ENCODE measurements at regions of chr5 and their contacts with region 1.

Region 1: DNA sequence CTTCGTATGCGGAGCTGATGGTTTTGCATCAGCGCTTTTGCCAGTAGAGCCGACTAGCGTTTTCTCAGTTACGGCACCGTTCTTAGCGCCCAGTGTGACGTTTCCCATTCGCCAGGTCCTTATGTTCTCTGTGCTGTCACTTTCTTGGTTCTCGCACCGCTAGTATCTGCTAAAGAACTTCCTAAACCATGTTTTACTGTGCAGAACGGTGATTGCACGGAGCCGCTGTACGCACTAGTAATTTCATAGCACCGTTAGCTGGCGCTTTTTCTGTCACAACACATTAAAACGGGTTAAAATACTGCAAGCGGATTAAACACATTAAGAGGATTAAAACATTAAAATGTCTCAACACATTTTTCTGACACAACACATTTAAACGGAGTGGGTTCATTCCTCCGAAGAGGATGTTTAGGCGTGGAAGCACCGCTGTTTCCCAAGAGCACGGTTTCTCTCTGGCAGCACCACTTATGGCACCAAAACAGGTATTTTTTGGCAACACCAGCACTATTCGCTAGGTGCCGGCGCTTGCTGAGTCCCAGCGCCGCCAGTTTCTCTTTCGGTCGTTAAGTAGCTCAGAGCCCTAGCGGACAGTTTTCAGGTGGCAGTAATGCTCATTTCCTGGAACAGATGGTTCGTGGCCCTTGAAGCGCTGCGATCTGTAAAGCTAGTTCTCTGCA is 20.4 kb downstream of the ANXA2R start:
- DNase-seq: no peak

Region 2: DNA sequence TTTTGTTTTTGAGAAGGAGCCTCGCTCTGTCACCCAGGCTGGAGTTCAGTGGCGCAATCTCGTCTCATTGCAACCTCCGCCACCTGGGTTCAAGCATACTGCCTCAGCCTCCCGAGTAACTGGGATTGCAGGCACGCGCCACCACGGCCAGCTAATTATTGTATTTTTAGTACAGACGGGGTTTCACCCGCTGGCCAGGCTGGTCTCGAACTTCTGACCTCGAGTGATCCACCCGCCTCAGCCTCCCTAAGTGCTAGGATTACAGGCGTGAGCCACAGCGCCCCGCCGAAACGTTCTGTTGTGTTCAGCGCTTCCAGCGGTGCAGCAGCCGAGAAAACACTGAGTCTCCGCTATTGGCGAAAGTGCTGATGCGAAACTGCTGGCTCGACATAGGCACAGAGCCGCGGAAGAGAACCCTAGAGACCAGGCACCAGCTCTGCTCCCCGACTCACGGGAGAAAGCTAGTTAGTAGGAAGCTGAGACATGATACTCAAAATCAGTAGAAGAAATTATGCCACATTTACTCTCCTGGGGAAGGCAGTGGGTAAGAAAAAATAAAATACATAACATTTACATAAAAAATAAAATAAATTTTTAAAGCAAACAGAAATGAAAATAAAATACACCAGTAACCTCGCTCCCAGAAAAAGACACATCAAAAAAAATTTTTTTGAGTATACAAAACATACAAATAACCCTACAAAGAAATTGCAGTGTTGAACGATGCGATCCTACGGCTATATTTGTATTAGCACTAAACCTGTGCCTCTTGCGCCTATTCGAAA is 11.2 kb before region 1 on chr5:
- intact Hi-C with region 1: loop called (anchors 1 kb)
- DNase-seq: peak; percentile 91

Region 3: DNA sequence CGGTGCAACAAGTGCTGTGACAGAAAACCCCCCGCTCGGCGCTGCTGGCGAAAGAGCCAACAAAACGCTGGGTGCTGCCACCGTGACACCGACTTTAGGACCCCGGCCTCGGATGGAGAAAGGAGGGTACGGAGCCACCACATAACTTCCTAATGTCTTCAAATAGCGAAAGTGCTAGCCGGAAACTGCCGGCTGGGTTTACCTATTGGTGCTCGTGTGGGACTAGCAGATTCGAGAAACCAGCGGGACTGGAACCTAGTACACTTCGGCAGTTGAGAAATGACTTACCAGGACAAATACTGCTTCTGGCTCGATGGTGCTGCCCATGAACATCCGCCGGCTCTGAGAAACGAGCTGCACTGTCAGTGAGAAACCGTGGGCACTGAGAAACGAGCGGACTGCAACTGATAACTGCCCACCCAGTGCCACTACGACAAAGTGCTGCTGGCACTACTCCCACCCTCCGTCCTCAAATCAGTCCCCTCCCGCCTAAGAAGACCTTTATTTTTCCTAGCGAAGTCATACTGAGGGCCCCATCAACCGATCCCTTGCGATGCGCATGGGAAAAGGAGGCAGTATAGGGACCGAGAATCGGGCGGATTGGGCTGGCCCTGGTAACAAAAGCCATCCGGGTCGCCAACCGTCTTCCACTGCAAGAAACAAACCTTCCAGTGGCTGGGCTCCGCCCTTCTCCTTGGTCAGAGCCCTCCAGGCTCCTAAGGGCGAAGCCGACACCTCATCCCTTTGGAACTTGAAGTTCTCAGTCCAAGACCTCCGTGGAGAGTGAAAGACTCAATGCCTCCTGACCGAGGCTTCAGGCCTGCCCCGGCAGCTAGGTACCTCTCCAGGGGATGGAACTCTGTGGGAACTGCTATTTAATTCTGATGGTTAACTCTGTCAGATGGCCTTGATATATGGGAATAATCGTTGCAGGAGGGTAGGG is 47.3 kb after region 1 on chr5:
- intact Hi-C with region 1: loop called (anchors 2 kb)
- DNase-seq: peak; percentile 95

Measured in cardiac septum (tissue), 1 donor.